ENCODE measurements at regions of chr15 and their contacts with region 1.

Region 1: GRCh38 chr15:40344631-40345120 is 3.9 kb upstream of the CCDC9B start:
- DNase-seq: peak; percentile 57 to 82 (median 81)
- H3K4me3 ChIP-seq: no peak overlapping the region
- H3K27ac ChIP-seq: no peak overlapping the region
- H3K4me1 ChIP-seq: peaks cover 0 to 33% (median 20%) of the 10 kb centered on the region in 4 experiments
- H3K27me3 ChIP-seq: no peaks in the 10 kb centered on the region

Region 2: GRCh38 chr15:40108855-40109735 is 235.6 kb before region 1 on chr15 and contains the start of gene BMF:
- CTCF ChIA-PET with region 1: no interaction called
- POLR2A ChIA-PET with region 1: no interaction called
- DNase-seq: peak; percentile 99
- H3K4me3 ChIP-seq: peak within 1 kb of the TSS; percentile 71 to 92 (median 76)
- H3K27ac ChIP-seq: peak within 1 kb of the TSS in 1 of 2 experiments; percentile 56
- H3K4me1 ChIP-seq: peaks cover 12 to 53% (median 50%) of the 10 kb centered on the region in 4 experiments
- H3K27me3 ChIP-seq: no peaks in the 10 kb centered on the region

Region 3: GRCh38 chr15:40372981-40373380 is 28.3 kb after region 1 on chr15:
- CTCF ChIA-PET with region 1: interaction called, 112 read pairs
- POLR2A ChIA-PET with region 1: no interaction called
- DNase-seq: no peak
- H3K4me3 ChIP-seq: no peak overlapping the region
- H3K27ac ChIP-seq: no peak overlapping the region
- H3K4me1 ChIP-seq: peaks cover 0 to 13% (median 6%) of the 10 kb centered on the region in 4 experiments
- H3K27me3 ChIP-seq: no peaks in the 10 kb centered on the region

Region 4: DNA sequence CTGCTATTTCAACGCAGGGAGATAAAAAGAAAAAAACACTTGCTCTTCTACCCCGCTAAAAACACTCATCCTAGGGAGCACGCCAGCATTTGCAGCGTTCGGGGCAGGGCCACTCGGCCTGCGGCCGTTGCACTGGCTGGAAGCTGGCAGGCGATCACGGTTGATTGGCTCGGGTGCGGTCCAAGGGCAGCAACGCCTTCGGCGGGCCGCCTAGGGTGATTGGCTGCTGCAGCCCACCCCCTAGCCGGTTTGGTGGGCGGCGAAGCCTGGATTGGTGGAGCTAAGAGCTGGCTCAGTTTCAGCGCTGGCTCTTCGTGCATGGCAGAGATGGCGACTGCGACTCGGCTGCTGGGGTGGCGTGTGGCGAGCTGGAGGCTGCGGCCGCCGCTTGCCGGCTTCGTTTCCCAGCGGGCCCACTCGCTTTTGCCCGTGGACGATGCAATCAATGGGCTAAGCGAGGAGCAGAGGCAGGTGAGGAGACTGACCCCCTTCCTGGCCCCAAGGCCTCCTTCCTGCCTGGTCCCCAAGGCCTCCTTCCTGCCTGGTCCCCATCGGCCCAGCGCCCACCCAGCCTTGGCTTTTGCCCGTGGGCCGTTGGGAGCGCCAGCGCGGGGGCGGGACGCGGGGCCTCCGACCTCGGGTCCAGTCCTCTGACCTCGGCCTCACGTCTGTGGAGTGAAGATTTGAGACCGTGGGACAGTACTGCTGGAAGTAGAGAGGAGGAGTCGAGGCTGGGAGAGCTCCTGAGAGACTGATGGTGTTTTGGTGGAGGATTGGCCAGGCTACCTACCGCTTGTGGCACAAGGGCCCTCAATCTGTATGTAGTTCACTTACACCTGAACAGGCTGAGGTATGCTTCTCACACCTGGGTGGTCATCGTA is 61.1 kb after region 1 on chr15 and contains the start of gene IVD:
- CTCF ChIA-PET with region 1: interaction called, 10 read pairs
- POLR2A ChIA-PET with region 1: no interaction called
- DNase-seq: peak; percentile 92 to 97 (median 97)
- H3K4me3 ChIP-seq: peak within 1 kb of the TSS; percentile 38 to 95 (median 83)
- H3K27ac ChIP-seq: peak within 1 kb of the TSS; percentile 61 to 81
- H3K4me1 ChIP-seq: peaks cover 10 to 29% (median 25%) of the 10 kb centered on the region in 4 experiments
- H3K27me3 ChIP-seq: no peaks in the 10 kb centered on the region

Measured in common myeloid progenitor, CD34-positive (primary cell).